ENCODE measurements at regions of chr3 and their contacts with region 1.

Region 1: DNA sequence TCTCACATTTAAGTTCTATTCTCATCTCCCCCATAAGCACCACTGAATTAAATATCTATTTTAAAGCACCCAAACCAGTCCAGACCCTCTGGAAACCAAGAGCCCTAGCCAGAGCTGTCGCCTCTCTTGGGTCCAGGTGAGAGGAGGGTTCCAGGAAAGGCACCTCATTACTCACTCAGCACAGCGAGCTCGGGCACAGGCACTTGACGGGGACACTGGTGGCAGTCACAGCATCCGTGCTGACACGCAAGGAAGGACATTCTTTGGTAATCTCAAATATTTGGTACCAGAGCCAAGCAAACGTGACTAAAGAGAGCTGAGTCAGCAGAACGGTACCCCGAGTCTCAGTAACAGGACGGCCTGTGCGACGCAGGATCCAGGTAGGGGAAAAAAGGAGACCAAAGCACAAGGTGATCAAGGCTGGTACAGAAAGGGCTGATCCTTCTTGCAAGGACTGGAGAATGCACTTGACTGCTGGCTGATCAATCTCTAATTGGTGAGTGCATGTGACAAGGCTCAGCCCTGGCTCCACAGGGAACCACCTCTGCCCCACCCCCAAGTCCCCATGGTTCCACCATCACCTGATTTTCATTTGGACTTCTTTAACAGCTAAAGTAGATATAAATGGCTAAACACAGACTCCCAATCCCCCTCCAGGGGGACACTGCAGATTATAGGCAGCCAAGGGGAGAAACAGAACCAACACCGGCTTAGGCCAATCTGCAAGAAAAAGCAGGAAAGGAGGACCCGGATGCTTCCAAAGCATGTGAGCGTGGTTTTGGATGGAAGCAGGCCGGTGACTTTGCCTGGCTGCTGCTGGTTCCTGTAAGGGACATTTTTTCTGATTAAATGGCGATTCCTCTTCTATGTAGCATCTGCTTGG is 61.4 kb downstream of the CHCHD6 start:
- DNase-seq: no peak
- H3K4me3 ChIP-seq: no peak overlapping the region
- H3K27ac ChIP-seq: no peak overlapping the region
- H3K4me1 ChIP-seq: peaks cover 13% of the 10 kb centered on the region
- H3K27me3 ChIP-seq: no peaks in the 10 kb centered on the region
- CTCF ChIP-seq: no peak

Region 2: GRCh38 chr3:125480656-125481374 is 1284.6 kb before region 1 on chr3:
- intact Hi-C with region 1: no loop called
- DNase-seq: no peak
- H3K4me3 ChIP-seq: no peak overlapping the region
- H3K27ac ChIP-seq: no peak overlapping the region
- H3K4me1 ChIP-seq: no peaks in the 10 kb centered on the region
- H3K27me3 ChIP-seq: no peaks in the 10 kb centered on the region
- CTCF ChIP-seq: no peak

Region 3: DNA sequence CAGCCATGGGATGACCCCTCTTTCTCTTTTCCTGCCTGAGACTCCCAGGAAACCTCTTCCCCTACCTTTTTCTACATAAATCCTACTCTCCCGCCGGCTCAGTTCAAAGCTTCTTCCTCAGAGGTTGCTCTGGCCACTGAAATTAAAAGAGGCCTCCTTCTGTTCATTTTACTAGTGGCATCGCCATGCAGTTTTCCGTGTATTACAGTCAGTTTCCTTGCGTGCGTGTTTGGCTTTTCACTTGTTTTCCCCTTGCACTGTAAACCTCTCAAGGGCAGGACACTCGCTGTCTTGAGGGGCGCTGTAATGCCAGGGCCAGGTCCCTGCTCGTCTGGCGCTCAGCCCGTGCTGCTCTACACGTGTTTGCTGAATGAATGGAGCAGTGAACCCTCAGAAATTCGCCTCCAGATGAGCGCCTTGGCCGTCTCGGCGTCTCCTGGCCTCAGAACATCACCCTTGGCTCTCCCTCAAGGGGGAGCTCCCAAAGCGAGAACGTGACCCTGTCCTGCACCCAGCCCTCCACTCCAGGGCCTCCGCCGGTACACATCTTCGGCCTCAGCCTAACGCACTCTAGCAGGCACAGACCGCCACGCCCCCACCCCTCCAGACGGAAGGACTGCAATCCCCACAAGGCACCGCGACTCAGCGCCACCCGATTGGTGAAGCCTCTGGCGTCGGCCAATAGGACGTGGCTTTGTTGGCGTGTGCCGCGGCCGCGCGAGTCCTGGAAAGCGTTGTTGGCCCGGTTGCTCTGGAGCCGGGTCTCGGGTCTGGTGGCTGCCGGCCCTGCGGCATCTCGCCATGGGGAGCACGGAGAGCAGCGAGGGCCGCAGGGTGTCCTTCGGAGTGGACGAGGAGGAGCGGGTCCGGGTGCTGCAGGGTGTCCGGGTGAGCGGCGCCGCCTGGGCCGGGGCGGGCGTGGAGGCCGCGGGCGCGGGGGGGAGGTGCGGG is 61.6 kb before region 1 on chr3 and contains the start of gene CHCHD6:
- intact Hi-C with region 1: no loop called
- DNase-seq: peak; percentile 94
- H3K4me3 ChIP-seq: peak within 1 kb of the TSS; percentile 90
- H3K27ac ChIP-seq: peak within 1 kb of the TSS; percentile 47
- H3K4me1 ChIP-seq: peaks cover 26% of the 10 kb centered on the region
- H3K27me3 ChIP-seq: peaks cover 12% of the 10 kb centered on the region
- CTCF ChIP-seq: no peak
- total RNA-seq, gene CHCHD6: 10.1 TPM

Region 4: DNA sequence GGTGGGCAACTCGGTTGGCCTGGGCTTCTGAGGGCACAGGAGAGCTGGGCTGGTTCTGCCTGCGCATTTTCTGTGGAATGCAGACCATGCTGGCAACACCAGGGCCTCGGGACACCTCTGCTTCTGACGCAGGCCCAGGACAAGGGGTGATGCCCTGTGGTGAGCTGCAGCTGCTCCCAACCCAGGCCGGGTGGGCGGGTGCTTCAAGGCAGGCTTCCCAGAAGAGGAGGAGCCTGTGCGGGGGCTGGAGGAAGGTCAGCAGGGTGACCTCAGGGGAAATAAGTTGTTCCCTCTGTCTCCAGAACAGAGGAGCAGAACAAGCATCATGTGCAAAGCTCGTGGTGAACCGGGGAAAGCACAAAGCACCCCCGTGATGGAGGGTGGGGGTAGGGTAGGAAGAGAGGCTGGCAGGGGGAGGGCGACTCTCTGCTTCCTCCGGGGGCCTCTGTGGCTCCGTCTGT is 206.5 kb after region 1 on chr3:
- intact Hi-C with region 1: loop called (anchors 10 kb)
- DNase-seq: peak; percentile 67
- H3K4me3 ChIP-seq: no peak overlapping the region
- H3K27ac ChIP-seq: peak overlapping the region; percentile 19
- H3K4me1 ChIP-seq: no peaks in the 10 kb centered on the region
- H3K27me3 ChIP-seq: peaks cover 28% of the 10 kb centered on the region
- CTCF ChIP-seq: no peak